ENCODE measurements at regions of chr5 and their contacts with region 1.

Region 1: GRCh38 chr5:91225848-91226686 is 157.1 kb downstream of the ARRDC3 start:
- DNase-seq: no peak
- ATAC-seq: no peak
- H3K4me3 ChIP-seq: no peak overlapping the region
- H3K27ac ChIP-seq: no peak overlapping the region
- H3K4me1 ChIP-seq: no peaks in the 10 kb centered on the region
- H3K27me3 ChIP-seq: no peaks in the 10 kb centered on the region

Region 2: DNA sequence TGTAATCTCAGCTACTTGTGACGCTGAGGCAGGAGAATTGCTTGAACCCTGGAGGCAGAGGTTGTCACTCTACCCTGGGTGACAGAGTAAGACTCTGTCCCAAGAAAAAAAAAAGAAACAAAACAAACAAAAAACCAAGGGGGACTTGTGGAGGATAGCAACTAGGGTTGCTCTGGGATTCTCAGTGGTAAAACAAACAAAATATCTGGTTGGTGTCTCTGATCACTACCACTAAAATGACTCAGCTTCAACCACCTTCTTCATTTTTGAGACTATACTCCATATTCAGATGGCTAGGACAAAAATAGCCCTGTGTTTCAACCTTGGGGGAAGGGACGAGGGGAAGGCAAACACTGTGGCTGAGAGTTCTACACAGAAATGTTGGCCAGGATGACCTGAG is 46.8 kb after region 1 on chr5:
- intact Hi-C with region 1: loop called in 1 of 2 experiments (anchors 10 kb)
- DNase-seq: no peak
- ATAC-seq: no peak
- H3K4me3 ChIP-seq: no peak overlapping the region
- H3K27ac ChIP-seq: no peak overlapping the region
- H3K4me1 ChIP-seq: peaks cover 0 to 3% of the 10 kb centered on the region in 2 donors
- H3K27me3 ChIP-seq: no peaks in the 10 kb centered on the region

Measured in aorta (tissue), 5 donors.